Activated CD4-positive, alpha-beta T cell treated with anti-CD3 and anti-CD28 coated beads for 36 hours (primary cell): ENCODE measurements at regions of chr22 and their contacts with region 1.

Region 1: GRCh38 chr22:23219822-23220484 is 39.6 kb downstream of the BCR start:
- DNase-seq: peak; percentile 89
- ATAC-seq: peak; percentile 88
- H3K4me3 Mint-ChIP-seq: peak overlapping the region; percentile 72
- H3K27ac Mint-ChIP-seq: peak overlapping the region; percentile 92
- H3K4me1 Mint-ChIP-seq: peaks cover 100% of the 10 kb centered on the region
- H3K27me3 Mint-ChIP-seq: no peaks in the 10 kb centered on the region

Region 2: GRCh38 chr22:23012081-23012622 is 207.8 kb before region 1 on chr22:
- CTCF ChIA-PET with region 1: no interaction called
- POLR2A ChIA-PET with region 1: no interaction called
- intact Hi-C with region 1: loop called in 1 of 2 experiments (anchors 1 kb)
- DNase-seq: peak; percentile 72
- ATAC-seq: peak; percentile 93
- H3K4me3 Mint-ChIP-seq: no peak overlapping the region
- H3K27ac Mint-ChIP-seq: peak overlapping the region; percentile 45
- H3K4me1 Mint-ChIP-seq: peaks cover 30% of the 10 kb centered on the region
- H3K27me3 Mint-ChIP-seq: peaks cover 51% of the 10 kb centered on the region

Region 3: DNA sequence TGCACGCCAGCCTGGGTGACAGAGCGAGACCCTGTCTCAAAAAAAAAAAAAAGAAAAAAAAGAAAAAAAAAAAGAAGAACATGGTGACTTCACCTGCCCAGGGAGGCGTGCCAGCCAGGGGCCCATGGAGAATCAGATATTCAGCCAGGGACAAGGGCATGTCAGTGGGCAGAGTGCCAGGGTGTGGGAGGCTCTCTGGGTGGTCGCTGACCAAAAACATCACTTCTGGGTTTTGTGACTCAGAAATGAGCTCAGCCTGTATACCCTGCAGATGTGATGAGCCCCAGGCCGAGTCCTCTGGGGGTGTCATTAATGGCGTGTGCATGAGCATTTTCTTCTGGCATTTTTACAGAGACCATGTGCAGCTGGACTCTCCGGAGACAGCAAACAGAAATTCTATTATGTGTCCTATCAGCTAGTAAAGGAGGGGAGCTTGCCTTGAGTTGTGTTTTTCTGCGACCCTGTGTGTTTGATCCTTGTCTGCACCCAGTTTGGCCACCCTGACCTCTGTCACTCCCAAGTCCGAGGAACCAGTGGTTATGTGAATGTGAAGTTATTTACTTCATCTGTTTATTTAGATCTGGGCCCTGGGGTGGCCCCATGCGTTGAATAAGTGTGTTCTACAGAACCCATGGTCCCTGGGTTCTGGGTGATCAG is 13.9 kb after region 1 on chr22:
- CTCF ChIA-PET with region 1: interaction called, 11 read pairs
- POLR2A ChIA-PET with region 1: interaction called, 3 read pairs
- intact Hi-C with region 1: no loop called
- DNase-seq: peak; percentile 87
- ATAC-seq: peak; percentile 76
- H3K4me3 Mint-ChIP-seq: peak overlapping the region; percentile 32
- H3K27ac Mint-ChIP-seq: peak overlapping the region; percentile 87
- H3K4me1 Mint-ChIP-seq: peaks cover 69% of the 10 kb centered on the region
- H3K27me3 Mint-ChIP-seq: no peaks in the 10 kb centered on the region

Region 4: DNA sequence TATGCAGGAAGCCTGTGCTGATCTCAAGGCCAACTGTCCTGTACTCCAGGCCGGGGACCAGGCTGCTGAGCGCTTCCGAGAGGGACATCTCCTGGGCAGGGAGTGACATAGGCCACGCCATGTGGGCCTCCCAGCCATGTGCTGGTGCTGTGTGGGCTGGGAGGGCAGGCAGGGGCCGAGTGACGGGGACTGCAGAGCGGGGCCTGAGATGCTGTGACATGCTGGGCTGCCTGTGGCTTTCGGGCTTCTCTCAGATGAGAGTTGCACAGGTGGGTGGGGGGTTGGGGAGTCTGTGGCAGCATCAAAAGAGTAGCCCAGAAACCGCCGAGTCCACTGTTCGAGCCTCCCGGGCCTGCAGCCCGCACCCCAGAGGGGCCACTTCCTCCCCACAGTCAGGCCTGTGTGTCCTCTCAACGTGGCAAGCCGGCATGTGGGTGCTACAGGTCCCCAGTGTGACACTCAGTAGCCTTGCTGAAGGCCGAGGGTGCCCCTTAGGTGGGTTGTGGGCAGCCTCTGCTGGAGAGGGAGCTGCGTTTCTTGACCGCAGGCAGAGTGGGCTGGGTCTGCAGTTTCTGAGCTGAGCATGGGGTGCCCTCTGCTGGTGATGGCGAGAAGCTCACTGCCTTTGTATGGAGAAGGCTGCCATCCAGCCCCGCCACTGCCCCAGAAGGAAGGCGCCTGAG is 61.6 kb after region 1 on chr22:
- CTCF ChIA-PET with region 1: interaction called, 4 read pairs
- POLR2A ChIA-PET with region 1: no interaction called
- intact Hi-C with region 1: loop called in 1 of 2 experiments (anchors 2 kb)
- DNase-seq: peak; percentile 89
- ATAC-seq: peak; percentile 71
- H3K4me3 Mint-ChIP-seq: no peak overlapping the region
- H3K27ac Mint-ChIP-seq: no peak overlapping the region
- H3K4me1 Mint-ChIP-seq: peaks cover 25% of the 10 kb centered on the region
- H3K27me3 Mint-ChIP-seq: no peaks in the 10 kb centered on the region

Region 5: GRCh38 chr22:23457355-23458068 is 237.6 kb after region 1 on chr22:
- CTCF ChIA-PET with region 1: no interaction called
- POLR2A ChIA-PET with region 1: no interaction called
- intact Hi-C with region 1: no loop called
- DNase-seq: no peak
- ATAC-seq: no peak
- H3K4me3 Mint-ChIP-seq: no peak overlapping the region
- H3K27ac Mint-ChIP-seq: no peak overlapping the region
- H3K4me1 Mint-ChIP-seq: peaks cover 11% of the 10 kb centered on the region
- H3K27me3 Mint-ChIP-seq: peaks cover 20% of the 10 kb centered on the region

Region 6: GRCh38 chr22:23838681-23839468 is 618.9 kb after region 1 on chr22 and contains the start of gene DERL3:
- CTCF ChIA-PET with region 1: no interaction called
- POLR2A ChIA-PET with region 1: no interaction called
- intact Hi-C with region 1: loop called in 1 of 2 experiments (anchors 10 kb)
- DNase-seq: peak; percentile 97
- ATAC-seq: peak; percentile 94
- H3K4me3 Mint-ChIP-seq: peak within 1 kb of the TSS; percentile 83
- H3K27ac Mint-ChIP-seq: peak within 1 kb of the TSS; percentile 80
- H3K4me1 Mint-ChIP-seq: peaks cover 19% of the 10 kb centered on the region
- H3K27me3 Mint-ChIP-seq: peaks cover 2% of the 10 kb centered on the region
- total RNA-seq, gene DERL3: 5.2 to 5.7 TPM